Activated T-helper 1 cell treated with anti-CD3 and anti-CD28 coated beads, Interleukin-12 subunit alpha, Interleukin-12 subunit beta, Interleukin-2, Interleukin-4 antibody, amounts not matched to agents 30 ng/mL and 10 ng/mL and 1 ng/mL, durations not matched to agents 14 hours and 24 hours and 36 hours (primary cell): ENCODE measurements at regions of chr20 and their contacts with region 1.

Region 1: GRCh38 chr20:36050436-36051317 is 82.3 kb downstream of the CNBD2 start:
- DNase-seq: peak; percentile 81
- H3K4me3 Mint-ChIP-seq: peak overlapping the region; percentile 97
- H3K27ac Mint-ChIP-seq: peak overlapping the region; percentile 90
- H3K4me1 Mint-ChIP-seq: peaks cover 39% of the 10 kb centered on the region
- H3K27me3 Mint-ChIP-seq: peaks cover 7% of the 10 kb centered on the region

Region 2: DNA sequence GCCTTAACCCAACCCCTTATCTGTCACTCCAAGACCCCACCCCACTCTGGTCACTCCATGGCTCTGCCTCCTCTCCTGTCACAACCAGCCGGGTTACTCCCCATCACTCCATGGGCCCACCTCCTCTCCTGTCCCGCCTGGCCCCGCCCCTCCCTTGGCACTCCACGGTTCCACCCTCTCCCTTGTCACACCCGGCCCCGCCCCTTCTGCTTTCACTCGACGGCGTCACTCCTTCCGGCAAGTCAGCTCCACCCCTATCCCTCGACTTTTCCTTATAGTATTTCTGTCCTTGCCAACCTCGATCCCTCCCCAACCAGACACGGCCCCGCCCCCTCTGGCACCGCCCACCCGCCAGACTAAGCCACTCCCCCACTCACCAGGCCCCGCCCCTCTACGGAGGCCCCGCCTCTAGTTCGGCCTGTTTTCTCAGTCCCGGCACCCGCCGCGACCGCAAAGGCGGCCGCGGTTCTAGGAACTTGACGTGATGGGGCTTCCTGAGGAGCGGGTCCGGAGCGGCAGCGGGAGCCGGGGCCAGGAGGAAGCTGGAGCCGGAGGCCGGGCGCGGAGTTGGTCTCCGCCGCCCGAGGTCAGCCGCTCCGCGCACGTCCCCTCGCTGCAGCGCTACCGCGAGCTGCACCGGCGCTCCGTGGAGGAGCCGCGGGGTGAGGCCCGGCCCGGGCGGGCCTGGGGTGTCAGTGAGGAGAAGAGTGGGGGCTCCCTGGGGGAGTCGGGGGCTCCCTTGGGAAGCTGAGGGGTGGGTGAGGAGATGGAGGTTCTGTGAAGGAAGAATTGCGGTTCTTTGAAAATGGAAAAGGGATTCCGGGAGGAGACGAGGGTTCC is 1174.3 kb before region 1 on chr20 and contains the start of gene ACSS2:
- intact Hi-C with region 1: no loop called
- DNase-seq: peak; percentile 95
- H3K4me3 Mint-ChIP-seq: peak within 1 kb of the TSS; percentile 96
- H3K27ac Mint-ChIP-seq: peak within 1 kb of the TSS; percentile 82
- H3K4me1 Mint-ChIP-seq: peaks cover 73% of the 10 kb centered on the region
- H3K27me3 Mint-ChIP-seq: peaks cover 4% of the 10 kb centered on the region
- total RNA-seq, gene ACSS2: 38.0 and 45.3 TPM in 2 replicates

Region 3: DNA sequence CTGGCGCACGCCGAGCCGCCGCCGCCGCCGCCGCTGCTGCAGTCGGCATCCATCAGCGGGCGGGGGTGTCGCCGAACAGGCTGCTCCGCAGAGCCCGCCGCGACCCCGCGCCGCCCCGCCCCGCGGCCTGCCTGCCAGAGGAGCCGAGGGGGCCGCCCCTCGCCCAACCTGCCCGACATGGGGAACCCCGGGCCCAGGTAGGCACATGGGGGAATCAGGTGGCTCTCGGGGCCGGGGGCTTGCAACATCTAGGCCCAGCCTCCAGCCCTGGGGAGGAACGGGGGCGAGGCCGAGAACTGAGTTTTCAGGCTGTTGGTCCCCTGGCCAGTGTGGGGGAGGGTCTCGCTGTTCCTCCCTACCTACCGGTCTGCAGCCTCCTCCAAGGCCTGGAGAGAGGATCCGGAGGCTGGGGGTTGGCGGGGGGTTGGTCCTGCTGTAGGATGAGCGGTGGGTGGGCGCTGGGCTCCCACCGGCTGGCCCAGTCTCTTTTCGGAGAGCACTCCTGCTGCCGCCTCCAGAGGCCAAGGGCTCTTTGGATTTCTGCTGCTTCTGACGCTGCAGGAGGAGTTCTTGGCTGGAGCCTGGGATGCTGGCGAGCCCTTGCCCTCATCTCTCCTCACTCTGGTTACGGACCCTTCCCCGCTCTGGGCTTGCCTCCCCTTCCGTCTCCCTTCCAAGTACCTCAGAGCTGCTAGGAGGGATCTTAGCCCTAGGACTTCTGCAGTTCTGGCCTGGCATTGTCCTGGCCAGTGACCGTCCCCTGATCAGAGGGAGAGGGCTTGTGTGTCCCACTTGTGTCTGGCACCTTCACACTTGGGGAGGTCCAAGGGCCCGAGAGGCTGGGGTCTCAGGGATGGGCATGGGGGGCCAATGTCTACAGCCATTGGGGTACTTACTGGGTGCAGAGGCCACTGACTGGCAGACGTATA is 104.3 kb after region 1 on chr20 and contains the start of gene EPB41L1:
- intact Hi-C with region 1: no loop called
- DNase-seq: no peak
- H3K4me3 Mint-ChIP-seq: peak within 1 kb of the TSS; percentile 63
- H3K27ac Mint-ChIP-seq: no peak within 1 kb of the TSS
- H3K4me1 Mint-ChIP-seq: no peaks in the 10 kb centered on the region
- H3K27me3 Mint-ChIP-seq: peaks cover 29% of the 10 kb centered on the region
- total RNA-seq, gene EPB41L1: 0.23 TPM in 1 of 2 replicates, not detected in the other

Region 4: DNA sequence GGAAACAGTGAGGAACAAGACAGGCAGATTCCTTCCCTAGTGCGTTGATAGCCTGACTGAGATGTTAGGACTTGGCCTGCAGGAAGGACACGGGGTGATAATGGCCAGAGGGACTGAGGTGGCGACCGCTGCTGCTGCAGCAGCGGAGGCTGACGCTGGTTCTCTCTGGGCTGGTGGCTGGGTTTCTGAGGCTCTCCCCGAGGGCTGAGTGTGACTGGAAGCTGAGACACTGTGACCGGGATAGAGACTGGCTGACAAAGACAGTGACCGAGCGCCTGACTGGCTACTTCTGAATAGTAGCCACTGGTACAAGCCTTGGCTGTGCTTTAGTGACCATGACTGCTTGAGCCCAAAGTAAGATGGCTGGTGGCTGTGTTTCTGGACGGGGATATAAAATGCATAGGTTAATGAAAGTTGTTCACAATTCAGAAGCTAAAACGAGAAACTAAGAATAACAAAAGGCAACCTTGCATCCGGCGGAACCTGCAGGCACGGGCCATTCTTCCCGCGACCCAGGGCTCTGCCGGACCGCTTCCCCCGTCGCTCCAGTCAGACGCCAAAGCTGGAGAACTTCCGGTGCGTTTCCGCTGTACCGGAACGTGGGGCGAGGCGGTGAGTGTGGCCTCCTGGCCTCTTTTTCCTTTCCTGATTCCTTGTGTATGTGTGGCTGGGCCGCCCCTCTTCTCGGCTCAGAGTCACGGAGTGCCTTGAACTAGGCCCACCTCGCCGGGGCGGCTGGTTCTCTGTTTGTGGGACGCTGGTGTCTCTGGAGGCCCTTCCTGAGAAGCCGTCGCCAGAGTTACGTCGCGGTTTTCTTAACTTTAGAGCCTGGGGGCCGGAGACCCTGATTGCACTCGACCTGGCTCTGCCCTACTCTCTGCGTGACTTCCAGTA is 185.5 kb after region 1 on chr20 and contains the start of gene AAR2:
- intact Hi-C with region 1: loop called (anchors 1 kb)
- DNase-seq: peak; percentile 76
- H3K4me3 Mint-ChIP-seq: peak within 1 kb of the TSS; percentile 88
- H3K27ac Mint-ChIP-seq: peak within 1 kb of the TSS; percentile 91
- H3K4me1 Mint-ChIP-seq: peaks cover 30% of the 10 kb centered on the region
- H3K27me3 Mint-ChIP-seq: no peaks in the 10 kb centered on the region
- total RNA-seq, gene AAR2: 33.3 and 36.7 TPM in 2 replicates